Activated CD4-positive, alpha-beta T cell treated with anti-CD3 and anti-CD28 coated beads, Interleukin-2, amount 10 ng/mL, durations not matched to agents 24 days and 14 days (primary cell): ENCODE measurements at regions of chr11 and their contacts with region 1.

Region 1: GRCh38 chr11:129117595-129118350 is 74.4 kb downstream of the ARHGAP32 start:
- DNase-seq: peak; percentile 84
- H3K4me3 Mint-ChIP-seq: no peak overlapping the region
- H3K27ac Mint-ChIP-seq: no peak overlapping the region
- H3K4me1 Mint-ChIP-seq: no peaks in the 10 kb centered on the region
- H3K27me3 Mint-ChIP-seq: peaks cover 4% of the 10 kb centered on the region

Region 2: DNA sequence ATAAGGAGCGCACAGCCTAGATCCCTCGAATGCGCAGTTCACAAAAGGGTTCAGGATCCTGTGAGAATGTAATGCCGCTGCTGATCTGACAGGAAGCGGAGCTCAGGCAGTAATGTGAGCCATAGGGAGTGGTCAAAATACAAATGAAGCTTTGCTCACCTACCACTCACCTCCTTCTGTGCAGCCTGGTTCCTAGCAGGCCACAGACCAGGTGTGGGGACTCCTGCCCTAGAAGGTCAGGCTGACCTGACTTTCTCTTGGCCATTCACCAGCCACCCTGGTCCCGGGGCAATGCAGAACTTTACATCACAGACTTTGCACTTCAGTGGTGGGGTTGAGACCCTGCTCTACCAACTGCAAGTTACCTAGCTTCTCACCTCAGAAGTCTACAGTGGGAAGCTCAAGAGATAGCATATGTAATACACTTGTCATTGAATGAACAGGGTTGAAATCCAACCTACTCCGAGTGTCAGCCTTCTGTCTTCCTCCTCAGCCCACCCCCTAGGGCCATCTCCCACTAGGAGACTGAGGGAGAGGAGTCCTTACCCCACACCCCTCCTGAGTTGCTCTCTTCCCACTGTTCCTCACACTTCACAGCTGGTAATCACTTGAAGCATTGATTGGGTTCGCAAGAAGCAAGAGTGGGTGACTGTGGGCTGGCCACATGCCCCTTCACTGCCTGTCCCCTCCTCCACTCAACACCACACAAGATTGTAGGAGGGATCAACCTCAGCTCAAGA is 248.8 kb before region 1 on chr11:
- intact Hi-C with region 1: no loop called
- DNase-seq: peak; percentile 80
- H3K4me3 Mint-ChIP-seq: no peak overlapping the region
- H3K27ac Mint-ChIP-seq: no peak overlapping the region
- H3K4me1 Mint-ChIP-seq: no peaks in the 10 kb centered on the region
- H3K27me3 Mint-ChIP-seq: peaks cover 11% of the 10 kb centered on the region

Region 3: GRCh38 chr11:128884703-128885338 is 233.0 kb before region 1 on chr11:
- intact Hi-C with region 1: loop called (anchors 5 kb)
- DNase-seq: peak; percentile 90
- H3K4me3 Mint-ChIP-seq: no peak overlapping the region
- H3K27ac Mint-ChIP-seq: no peak overlapping the region
- H3K4me1 Mint-ChIP-seq: no peaks in the 10 kb centered on the region
- H3K27me3 Mint-ChIP-seq: peaks cover 61% of the 10 kb centered on the region

Region 4: DNA sequence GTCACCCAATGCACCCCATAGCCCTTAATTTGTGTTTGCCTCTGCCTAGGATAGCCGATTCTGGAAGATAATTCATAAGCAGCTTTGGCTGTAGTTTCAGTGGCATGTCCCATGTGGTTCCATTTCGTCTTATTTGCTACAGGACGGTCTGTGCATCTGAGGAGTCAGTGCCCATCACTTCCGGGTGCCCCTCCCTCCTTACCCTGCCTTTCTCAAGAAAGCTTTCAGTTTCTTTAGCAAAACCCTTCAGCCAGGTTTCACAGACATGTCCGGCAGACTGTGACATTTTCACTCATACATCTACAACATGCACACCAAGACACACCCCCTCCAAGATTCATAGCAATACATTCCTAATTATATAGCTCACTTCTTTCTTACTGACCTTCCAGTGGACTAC is 189.4 kb before region 1 on chr11:
- intact Hi-C with region 1: no loop called
- DNase-seq: peak; percentile 66
- H3K4me3 Mint-ChIP-seq: no peak overlapping the region
- H3K27ac Mint-ChIP-seq: no peak overlapping the region
- H3K4me1 Mint-ChIP-seq: peaks cover 8% of the 10 kb centered on the region
- H3K27me3 Mint-ChIP-seq: no peaks in the 10 kb centered on the region

Region 5: GRCh38 chr11:128965485-128965884 is 152.3 kb before region 1 on chr11:
- intact Hi-C with region 1: loop called (anchors 10 kb)
- DNase-seq: peak; percentile 65
- H3K4me3 Mint-ChIP-seq: peak overlapping the region; percentile 47
- H3K27ac Mint-ChIP-seq: peak overlapping the region; percentile 68
- H3K4me1 Mint-ChIP-seq: peaks cover 42% of the 10 kb centered on the region
- H3K27me3 Mint-ChIP-seq: no peaks in the 10 kb centered on the region

Region 6: GRCh38 chr11:129279326-129280026 is 161.7 kb after region 1 on chr11:
- intact Hi-C with region 1: loop called (anchors 5 kb)
- DNase-seq: peak; percentile 95
- H3K4me3 Mint-ChIP-seq: peak overlapping the region; percentile 77
- H3K27ac Mint-ChIP-seq: peak overlapping the region; percentile 86
- H3K4me1 Mint-ChIP-seq: peaks cover 36% of the 10 kb centered on the region
- H3K27me3 Mint-ChIP-seq: peaks cover 33% of the 10 kb centered on the region

Region 7: GRCh38 chr11:129331871-129332274 is 214.1 kb after region 1 on chr11:
- intact Hi-C with region 1: loop called (anchors 1 kb)
- DNase-seq: peak; percentile 89
- H3K4me3 Mint-ChIP-seq: no peak overlapping the region
- H3K27ac Mint-ChIP-seq: no peak overlapping the region
- H3K4me1 Mint-ChIP-seq: peaks cover 2% of the 10 kb centered on the region
- H3K27me3 Mint-ChIP-seq: peaks cover 3% of the 10 kb centered on the region

Region 8: DNA sequence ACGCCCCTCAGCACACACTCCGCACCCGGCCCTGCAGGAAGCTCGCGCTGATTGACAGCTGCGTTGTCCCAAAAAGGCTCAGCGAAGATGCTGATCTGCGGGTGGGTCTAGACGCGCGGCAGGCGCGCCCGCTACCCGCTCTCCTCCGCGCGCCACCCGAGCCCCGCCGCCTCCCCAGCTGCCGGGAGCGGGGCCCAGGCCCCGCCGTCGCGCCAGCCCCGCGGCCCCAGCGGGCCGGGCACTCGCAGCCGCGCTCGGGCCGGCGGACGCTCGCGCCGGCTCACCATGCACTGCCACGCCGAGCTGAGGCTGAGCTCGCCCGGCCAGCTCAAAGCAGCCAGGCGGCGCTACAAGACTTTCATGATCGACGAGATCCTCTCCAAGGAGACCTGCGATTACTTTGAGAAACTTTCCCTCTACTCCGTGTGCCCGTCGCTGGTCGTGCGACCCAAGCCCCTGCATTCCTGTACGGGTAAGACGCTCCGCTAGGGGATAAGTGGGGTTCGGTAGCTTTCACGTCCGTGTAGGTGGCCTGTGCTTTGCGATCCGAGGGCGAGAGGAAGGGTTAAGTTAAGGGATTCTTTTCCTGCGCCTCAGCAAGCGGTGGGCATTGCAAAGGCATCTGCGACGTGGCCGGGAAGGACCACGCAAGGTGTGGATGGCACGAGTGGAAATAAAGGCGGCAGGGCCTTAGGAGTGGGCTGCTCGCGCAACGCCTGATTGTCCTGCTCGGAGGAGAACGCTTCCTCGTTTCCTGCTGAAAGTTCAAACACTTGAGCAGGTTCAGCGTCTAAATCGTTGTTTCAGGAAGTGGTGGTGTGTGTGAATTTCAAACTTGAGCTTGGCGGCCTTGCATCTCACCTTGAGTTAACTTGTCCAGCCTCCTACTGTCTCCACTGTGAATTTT is 258.2 kb after region 1 on chr11 and contains the start of gene BARX2:
- intact Hi-C with region 1: no loop called
- DNase-seq: peak; percentile 80
- H3K4me3 Mint-ChIP-seq: peak within 1 kb of the TSS; percentile 86
- H3K27ac Mint-ChIP-seq: peak within 1 kb of the TSS; percentile 52
- H3K4me1 Mint-ChIP-seq: peaks cover 26% of the 10 kb centered on the region
- H3K27me3 Mint-ChIP-seq: peaks cover 72% of the 10 kb centered on the region
- total RNA-seq, gene BARX2: 4.1 and 4.7 TPM in 2 replicates

Region 9: DNA sequence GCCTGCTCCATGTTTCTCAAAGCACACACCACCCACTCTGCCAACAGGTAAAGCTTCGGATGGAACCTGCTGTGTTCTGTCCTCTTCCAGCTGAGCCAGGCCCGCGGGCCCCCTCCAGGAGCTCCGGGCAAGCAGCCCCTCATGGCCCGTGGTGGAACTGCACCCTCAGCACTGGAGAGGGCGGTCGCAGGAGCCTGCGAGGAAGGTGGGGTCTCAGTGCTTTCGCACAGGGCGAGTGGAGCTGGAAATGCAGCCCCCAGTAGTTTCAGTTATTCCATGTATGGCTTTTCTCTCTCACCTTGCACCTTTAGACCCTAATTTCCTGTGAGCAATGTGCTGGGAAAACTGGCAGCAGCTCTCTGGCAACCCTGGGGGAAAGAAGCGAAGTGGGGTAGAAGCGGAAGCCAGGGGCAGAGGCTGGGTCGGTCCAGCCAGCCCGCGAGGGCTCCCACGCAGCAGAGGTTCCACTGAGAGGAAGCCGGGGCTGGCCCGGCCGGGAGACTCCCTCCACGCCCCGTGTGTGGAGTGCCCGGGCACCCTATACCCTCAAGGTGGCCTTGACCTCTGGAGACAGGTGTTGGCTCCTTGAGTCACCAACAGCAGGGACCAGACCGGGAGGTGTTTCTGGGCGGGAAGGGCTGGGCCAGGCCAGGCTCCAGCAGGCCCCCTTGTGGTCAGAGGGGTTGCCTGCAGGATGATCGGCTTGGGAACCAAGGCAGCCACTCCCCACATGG is 578.0 kb after region 1 on chr11:
- intact Hi-C with region 1: loop called (anchors 2 kb)
- DNase-seq: peak; percentile 88
- H3K4me3 Mint-ChIP-seq: peak overlapping the region; percentile 77
- H3K27ac Mint-ChIP-seq: peak overlapping the region; percentile 41
- H3K4me1 Mint-ChIP-seq: peaks cover 6% of the 10 kb centered on the region
- H3K27me3 Mint-ChIP-seq: peaks cover 3% of the 10 kb centered on the region

Region 10: DNA sequence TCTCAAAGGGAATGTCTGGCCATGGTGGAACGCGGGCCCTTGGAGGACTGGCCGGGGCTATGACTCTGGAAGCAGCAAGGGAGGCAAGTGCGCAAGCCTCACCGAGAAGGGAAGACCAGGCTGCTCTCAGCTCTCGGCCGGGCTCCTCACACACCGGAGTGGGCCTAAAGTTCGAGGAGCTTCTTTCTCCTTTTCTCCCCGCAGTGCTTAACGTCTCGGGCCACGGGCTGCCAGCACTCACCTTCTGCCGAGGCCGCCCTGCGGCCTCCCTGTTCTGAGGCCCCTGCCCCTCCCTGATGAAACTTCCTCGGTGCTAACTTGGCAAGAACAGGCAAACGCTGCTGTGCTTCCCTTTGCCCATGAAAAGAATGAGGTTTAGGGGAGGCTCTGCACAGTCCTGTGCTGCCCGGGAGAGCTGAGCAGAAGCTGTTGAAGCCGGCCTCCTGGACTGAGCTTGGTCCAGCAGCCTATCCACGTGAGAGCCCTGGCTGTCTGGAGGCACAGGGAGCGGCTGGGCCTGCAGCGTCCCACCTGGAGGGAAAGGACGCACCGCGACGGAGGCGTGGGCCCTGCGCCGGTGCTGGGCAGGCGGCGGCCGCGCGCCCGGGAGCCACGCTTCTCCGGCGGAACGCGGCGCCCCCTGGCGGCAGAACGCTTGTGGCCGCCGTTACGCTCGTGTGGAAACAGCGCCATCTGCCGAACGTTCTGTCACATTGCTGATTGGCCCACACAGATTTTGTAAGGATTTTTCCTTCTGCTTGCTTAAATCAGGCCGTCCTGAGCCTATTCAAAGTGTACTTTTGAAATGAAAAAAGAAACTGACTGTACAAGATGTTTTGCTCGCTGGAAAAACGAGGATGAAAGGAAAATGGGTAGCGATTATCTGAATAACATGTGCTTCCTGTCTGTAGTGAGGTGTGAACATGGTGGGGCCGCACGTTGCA is 632.8 kb after region 1 on chr11:
- intact Hi-C with region 1: loop called (anchors 5 kb)
- DNase-seq: peak; percentile 94
- H3K4me3 Mint-ChIP-seq: no peak overlapping the region
- H3K27ac Mint-ChIP-seq: no peak overlapping the region
- H3K4me1 Mint-ChIP-seq: peaks cover 2% of the 10 kb centered on the region
- H3K27me3 Mint-ChIP-seq: peaks cover 16% of the 10 kb centered on the region